Motor neuron (in vitro differentiated cells): ENCODE measurements at regions of chr15 and their contacts with region 1.

Region 1: GRCh38 chr15:98881526-98882520 is 125.8 kb downstream of the PGPEP1L start:
- ATAC-seq: peak in 6 of 8 experiments; percentile 11 to 69 (median 50)
- H3K4me3 ChIP-seq: no peak overlapping the region
- H3K27ac ChIP-seq: no peak overlapping the region
- H3K4me1 ChIP-seq: peaks cover 23 to 30% of the 10 kb centered on the region in 2 donors

Region 2: DNA sequence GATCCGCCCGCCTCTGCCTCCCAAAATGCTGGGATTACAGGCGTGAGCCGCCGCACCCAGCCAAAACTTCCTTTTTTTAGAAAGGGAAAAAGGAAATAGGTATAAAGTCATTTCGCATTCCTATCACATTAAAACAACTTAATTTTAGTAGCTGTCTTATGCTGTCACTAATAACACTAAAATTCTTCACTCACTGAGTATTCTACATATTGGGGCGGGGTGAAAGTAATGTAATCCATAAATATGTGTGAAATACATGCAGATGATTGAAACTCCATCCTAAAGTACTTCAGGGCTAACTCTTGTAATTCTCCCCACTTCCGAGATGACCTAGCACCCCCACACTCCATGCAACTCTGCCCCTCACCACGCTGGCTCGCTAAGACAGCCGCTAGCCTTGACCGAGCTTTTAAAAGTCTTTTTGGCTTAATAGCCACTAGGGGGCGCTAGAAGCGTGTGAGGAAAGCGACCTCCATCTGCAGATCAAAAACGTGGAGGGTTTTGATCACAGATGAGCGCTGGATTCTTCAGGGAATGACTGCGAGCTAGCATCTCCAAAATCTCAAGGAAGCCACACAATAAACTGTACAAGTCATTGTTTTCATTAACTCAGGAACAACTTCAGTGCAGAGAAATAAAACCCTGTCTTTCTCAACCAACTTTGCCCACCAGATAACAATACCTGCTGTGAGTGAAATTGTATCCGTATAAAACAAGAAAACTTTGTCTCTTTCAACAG is 362.8 kb before region 1 on chr15:
- in situ Hi-C with region 1: loop called in 1 of 9 experiments (anchors 25 kb)
- ATAC-seq: peak; percentile 79 to 97 (median 88)
- H3K4me3 ChIP-seq: no peak overlapping the region
- H3K27ac ChIP-seq: no peak overlapping the region
- H3K4me1 ChIP-seq: peaks cover 2 to 4% of the 10 kb centered on the region in 2 donors

Region 3: GRCh38 chr15:98548154-98548971 is 333.5 kb before region 1 on chr15:
- in situ Hi-C with region 1: loop called in 1 of 9 experiments (anchors 25 kb)
- ATAC-seq: peak; percentile 68 to 85 (median 81)
- H3K4me3 ChIP-seq: peak overlapping the region; percentile 43 to 53 (median 46)
- H3K27ac ChIP-seq: peak overlapping the region in 1 of 2 donors; percentile 66
- H3K4me1 ChIP-seq: peaks cover 5 to 7% of the 10 kb centered on the region in 2 donors

Region 4: DNA sequence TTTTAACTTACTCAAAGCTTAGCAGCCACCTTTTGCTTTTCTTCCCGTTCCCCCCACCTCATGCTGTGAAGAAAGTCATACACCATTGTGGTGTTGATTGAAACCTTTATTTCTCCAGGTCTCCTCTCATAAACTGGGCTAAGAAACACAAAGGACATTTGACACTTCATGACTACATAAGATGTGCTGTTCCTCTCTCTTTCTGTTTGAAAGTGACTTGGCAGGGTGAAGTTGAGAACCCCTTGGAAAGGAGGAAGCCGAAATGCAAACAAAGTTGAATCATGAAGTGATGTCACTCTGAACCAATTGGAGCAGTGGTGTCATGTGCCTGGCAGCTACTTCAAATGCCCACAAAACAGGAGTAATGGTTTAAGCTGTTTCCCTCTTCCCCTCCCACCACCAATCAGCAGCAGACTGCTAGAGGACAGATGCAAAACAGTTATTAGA is 58.8 kb before region 1 on chr15:
- in situ Hi-C with region 1: no loop called
- ATAC-seq: peak; percentile 40 to 99 (median 92)
- H3K4me3 ChIP-seq: no peak overlapping the region
- H3K27ac ChIP-seq: no peak overlapping the region
- H3K4me1 ChIP-seq: peaks cover 6 to 28% of the 10 kb centered on the region in 2 donors

Region 5: GRCh38 chr15:100284701-100285100 is 1402.9 kb after region 1 on chr15:
- in situ Hi-C with region 1: no loop called
- ATAC-seq: peak in 2 of 8 experiments; percentile 30 to 41
- H3K4me3 ChIP-seq: no peak overlapping the region
- H3K27ac ChIP-seq: no peak overlapping the region
- H3K4me1 ChIP-seq: no peaks in the 10 kb centered on the region